Gastrocnemius medialis (tissue), 4 donors: ENCODE measurements at regions of chr15 and their contacts with region 1.

Region 1: DNA sequence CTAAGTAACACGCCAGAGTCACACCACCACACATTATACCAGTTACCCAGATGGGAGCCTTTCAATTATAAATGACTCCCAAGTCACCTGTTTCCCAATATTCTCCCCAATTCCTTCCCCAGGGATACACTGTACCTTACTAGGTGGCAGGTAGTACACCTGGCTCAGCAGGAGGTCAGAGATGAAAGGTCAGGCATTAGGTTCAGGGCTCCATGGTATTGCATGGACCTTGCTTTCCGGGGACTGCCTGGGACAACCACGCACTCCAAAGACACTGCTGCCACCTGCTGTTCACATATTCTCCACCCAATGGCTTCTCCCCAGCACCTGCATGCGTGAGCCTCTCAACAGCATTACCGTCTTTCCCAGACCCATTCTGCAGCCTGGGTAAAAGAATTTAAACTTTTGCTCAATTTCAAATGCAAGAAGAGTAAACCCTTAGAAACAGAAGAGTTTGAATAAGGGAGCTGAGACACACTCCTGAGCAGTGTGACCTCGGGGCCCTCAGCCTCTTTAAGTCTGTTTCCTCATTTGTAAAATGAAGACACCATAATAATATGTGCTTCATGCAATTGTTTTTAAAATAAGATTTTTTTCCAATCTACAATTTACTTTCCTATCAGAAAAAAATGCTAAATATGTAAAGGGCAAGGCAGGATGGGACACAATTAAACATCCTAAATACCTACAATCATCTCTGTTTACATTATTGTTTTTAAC is 28.0 kb upstream of the LACTB start:
- DNase-seq: peak; percentile 69 to 74
- ATAC-seq: peak; percentile 89 to 95
- H3K4me3 ChIP-seq: no peak overlapping the region
- H3K27ac ChIP-seq: no peak overlapping the region
- H3K4me1 ChIP-seq: peaks cover 0 to 4% of the 10 kb centered on the region in 2 donors
- H3K27me3 ChIP-seq: no peaks in the 10 kb centered on the region
- CTCF ChIP-seq: peak; percentile 82 to 93 (median 90)
- POLR2A ChIP-seq: no peak

Region 2: DNA sequence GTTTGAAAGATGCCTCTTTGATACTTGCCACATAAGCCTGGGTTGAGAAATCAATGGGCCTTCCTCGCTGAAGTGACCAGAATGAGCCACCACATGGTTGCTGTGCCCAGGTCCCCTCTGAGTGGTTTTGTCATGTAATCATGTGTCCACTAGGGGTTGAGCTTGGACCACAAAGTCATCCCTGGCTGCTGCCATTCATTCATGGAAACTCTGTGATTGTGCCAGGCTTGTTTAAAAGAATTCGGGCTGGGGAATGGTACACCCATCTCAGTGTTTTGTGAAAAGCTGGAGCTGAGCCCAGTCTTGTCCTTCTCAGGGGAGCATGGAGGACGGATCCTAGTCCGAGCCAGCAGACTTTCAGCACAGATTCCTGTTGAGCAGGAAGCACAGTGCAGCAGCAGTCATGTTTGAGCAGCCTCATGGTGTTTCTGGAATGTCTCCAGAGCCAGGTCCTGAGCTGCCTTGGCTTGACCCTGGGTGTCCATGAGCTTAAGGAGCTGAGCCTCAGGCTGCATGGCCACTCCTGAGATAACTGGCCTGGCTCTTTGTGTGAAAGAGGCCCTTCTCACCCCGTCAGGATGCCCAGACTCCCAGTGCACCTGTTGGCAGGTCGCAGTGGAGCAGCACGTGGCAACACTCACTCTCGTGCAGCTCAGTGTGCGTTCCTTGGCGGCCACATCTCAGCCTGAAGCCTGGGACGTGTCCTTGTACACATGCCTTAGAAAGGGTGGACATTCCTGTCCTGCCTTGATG is 311.4 kb before region 1 on chr15:
- in situ Hi-C with region 1: loop called in 2 of 4 experiments (anchors 5 to 10 kb)
- intact Hi-C with region 1: loop called (anchors 2 kb)
- DNase-seq: peak; percentile 31 to 67
- ATAC-seq: peak; percentile 80 to 92
- H3K4me3 ChIP-seq: no peak overlapping the region
- H3K27ac ChIP-seq: no peak overlapping the region
- H3K4me1 ChIP-seq: peaks cover 0 to 11% of the 10 kb centered on the region in 2 donors
- H3K27me3 ChIP-seq: no peaks in the 10 kb centered on the region
- CTCF ChIP-seq: peak; percentile 55 to 67 (median 63)
- POLR2A ChIP-seq: no peak

Region 3: DNA sequence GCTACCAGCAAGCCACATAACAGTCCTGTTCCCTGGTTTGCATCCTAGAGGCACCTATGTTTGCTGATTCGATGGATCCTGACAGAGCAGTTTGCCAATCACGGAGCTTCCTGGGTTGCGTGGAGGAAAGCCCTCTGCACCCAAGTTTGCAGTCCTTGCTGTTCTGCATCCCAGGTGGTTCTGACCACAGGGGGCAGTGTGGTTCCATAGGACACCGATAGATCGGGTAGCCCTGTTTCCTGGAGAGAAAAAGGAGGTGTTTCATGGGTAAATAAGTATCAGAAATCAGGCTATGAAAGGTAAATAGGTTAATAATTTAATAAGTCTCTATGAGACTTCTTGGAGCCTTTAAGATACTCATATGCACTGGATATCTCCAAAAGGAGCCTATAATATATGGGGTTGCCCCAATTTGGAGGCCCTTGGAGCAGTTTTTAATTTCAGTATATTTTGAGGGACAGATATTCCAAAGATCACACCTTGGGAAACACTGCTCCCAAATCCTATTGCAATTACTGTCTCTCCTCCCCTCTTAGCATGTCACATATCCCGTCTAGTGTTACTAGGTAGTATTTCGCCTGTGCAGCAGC is 245.7 kb before region 1 on chr15:
- in situ Hi-C with region 1: loop called (anchors 5 kb)
- intact Hi-C with region 1: loop called (anchors 1 kb)
- DNase-seq: peak in 1 of 2 donors; percentile 44
- ATAC-seq: peak; percentile 66 to 77
- H3K4me3 ChIP-seq: no peak overlapping the region
- H3K27ac ChIP-seq: no peak overlapping the region
- H3K4me1 ChIP-seq: peaks cover 9 to 13% of the 10 kb centered on the region in 2 donors
- H3K27me3 ChIP-seq: no peaks in the 10 kb centered on the region
- CTCF ChIP-seq: peak; percentile 49 to 91 (median 83)
- POLR2A ChIP-seq: no peak

Region 4: GRCh38 chr15:63004211-63004610 is 89.4 kb before region 1 on chr15:
- in situ Hi-C with region 1: no loop called
- intact Hi-C with region 1: loop called (anchors 1 kb)
- DNase-seq: peak; percentile 22 to 53
- ATAC-seq: peak; percentile 95
- H3K4me3 ChIP-seq: no peak overlapping the region
- H3K27ac ChIP-seq: no peak overlapping the region
- H3K4me1 ChIP-seq: peaks cover 0 to 3% of the 10 kb centered on the region in 2 donors
- H3K27me3 ChIP-seq: no peaks in the 10 kb centered on the region
- CTCF ChIP-seq: peak; percentile 16 to 53 (median 47)
- POLR2A ChIP-seq: no peak

Region 5: GRCh38 chr15:63048115-63048775 is 45.4 kb before region 1 on chr15:
- in situ Hi-C with region 1: loop called in 1 of 4 experiments (anchors 5 kb)
- intact Hi-C with region 1: loop called (anchors 1 kb)
- DNase-seq: peak; percentile 78 to 86
- ATAC-seq: peak; percentile 75 to 78
- H3K4me3 ChIP-seq: peak overlapping the region; percentile 72 to 94 (median 80)
- H3K27ac ChIP-seq: peak overlapping the region; percentile 86 to 96 (median 91)
- H3K4me1 ChIP-seq: peaks cover 70 to 74% of the 10 kb centered on the region in 2 donors
- H3K27me3 ChIP-seq: peaks cover 0 to 19% (median 0%) of the 10 kb centered on the region in 3 donors
- CTCF ChIP-seq: peak; percentile 97 to 99 (median 98)
- POLR2A ChIP-seq: peak; percentile 61 to 74

Region 6: DNA sequence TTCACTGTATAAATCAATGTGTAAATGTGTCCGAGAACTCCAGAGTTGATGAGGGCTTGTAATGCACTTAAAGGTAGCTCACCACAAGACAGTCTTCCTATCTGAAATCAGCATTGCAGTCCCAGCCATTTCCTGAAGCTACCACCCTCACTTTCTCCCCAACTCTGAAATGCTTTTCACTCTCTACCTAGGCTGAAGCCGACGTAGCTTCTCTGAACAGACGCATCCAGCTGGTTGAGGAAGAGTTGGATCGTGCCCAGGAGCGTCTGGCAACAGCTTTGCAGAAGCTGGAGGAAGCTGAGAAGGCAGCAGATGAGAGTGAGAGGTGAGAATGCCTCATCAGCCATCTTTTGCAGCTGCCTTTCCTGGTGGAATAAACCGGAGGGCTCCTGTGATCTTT is 36.9 kb before region 1 on chr15:
- in situ Hi-C with region 1: loop called in 2 of 4 experiments (anchors 5 kb)
- intact Hi-C with region 1: no loop called
- DNase-seq: peak in 1 of 2 donors; percentile 55
- ATAC-seq: peak in 1 of 2 donors; percentile 48
- H3K4me3 ChIP-seq: no peak overlapping the region
- H3K27ac ChIP-seq: peak overlapping the region; percentile 44 to 96 (median 90)
- H3K4me1 ChIP-seq: peaks cover 34 to 46% of the 10 kb centered on the region in 2 donors
- H3K27me3 ChIP-seq: no peaks in the 10 kb centered on the region
- CTCF ChIP-seq: no peak
- POLR2A ChIP-seq: no peak